HepG2 (cell line): ENCODE measurements at regions of chr11 and their contacts with region 1.

Region 1: DNA sequence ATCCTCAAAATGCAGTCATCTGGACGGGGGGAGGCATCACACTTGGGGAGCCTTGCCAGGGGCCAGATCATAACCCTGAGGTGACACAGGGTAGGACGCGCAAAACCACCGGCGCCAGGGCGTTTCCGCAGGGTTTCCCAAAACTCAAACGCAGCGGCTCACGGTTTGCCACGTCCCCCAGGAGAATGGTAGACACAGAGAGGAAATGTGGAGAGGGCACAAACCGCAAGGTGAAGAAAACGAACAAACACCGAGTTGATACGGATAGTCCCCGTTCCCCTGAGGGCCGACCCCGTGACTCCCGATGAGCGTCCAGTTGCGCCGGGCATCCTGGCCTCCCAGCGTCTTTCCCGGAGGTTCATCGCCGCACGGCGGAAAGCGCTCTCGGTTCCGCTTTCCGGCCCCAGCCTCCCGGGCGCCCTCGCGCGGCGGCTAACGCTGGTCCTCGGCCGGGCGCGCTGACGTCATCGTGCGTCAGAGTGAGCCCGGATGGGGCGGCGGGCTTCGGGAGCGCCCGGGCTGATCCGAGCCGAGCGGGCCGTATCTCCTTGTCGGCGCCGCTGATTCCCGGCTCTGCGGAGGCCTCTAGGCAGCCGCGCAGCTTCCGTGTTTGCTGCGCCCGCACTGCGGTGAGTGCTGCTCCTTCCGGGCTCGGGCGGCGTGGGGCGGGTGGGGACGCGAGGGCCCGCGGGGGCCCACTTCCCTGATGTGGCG is at the start of gene BIRC2:
- DNase-seq: peak; percentile 79
- ATAC-seq: peak; percentile 96
- H3K4me3 ChIP-seq: peak within 1 kb of the TSS; percentile 85 to 98 (median 96)
- H3K27ac ChIP-seq: peak within 1 kb of the TSS; percentile 96
- H3K4me1 ChIP-seq: peaks cover 30% of the 10 kb centered on the region
- H3K27me3 ChIP-seq: no peaks in the 10 kb centered on the region; a peak in 1 of 5 replicates
- CTCF ChIP-seq: peak; percentile 95
- EP300 ChIP-seq: peak; percentile 16 to 38; a peak in 1 of 4 replicates
- POLR2A ChIP-seq: peak; percentile 78 to 82
- RAD21 ChIP-seq: peak; percentile 78
- total RNA-seq, gene BIRC2: 61.7 and 83.2 TPM in 2 replicates

Region 2: GRCh38 chr11:101929294-101929916 is 417.5 kb before region 1 on chr11:
- CTCF ChIA-PET with region 1: no interaction called
- POLR2A ChIA-PET with region 1: no interaction called
- in situ Hi-C with region 1: no loop called
- intact Hi-C with region 1: no loop called
- DNase-seq: peak; percentile 58
- ATAC-seq: peak; percentile 99
- H3K4me3 ChIP-seq: no peak overlapping the region; a peak in 1 of 6 replicates
- H3K27ac ChIP-seq: no peak overlapping the region
- H3K4me1 ChIP-seq: peaks cover 10% of the 10 kb centered on the region
- H3K27me3 ChIP-seq: no peaks in the 10 kb centered on the region
- CTCF ChIP-seq: peak; percentile 66
- EP300 ChIP-seq: no peak
- POLR2A ChIP-seq: no peak
- RAD21 ChIP-seq: peak; percentile 51

Region 3: GRCh38 chr11:102287964-102288724 is 58.8 kb before region 1 on chr11:
- CTCF ChIA-PET with region 1: interaction called, 10 read pairs
- POLR2A ChIA-PET with region 1: no interaction called
- in situ Hi-C with region 1: no loop called
- intact Hi-C with region 1: loop called (anchors 2 kb)
- DNase-seq: peak; percentile 68
- ATAC-seq: peak; percentile 86
- H3K4me3 ChIP-seq: no peak overlapping the region
- H3K27ac ChIP-seq: no peak overlapping the region
- H3K4me1 ChIP-seq: peaks cover 55% of the 10 kb centered on the region
- H3K27me3 ChIP-seq: no peaks in the 10 kb centered on the region
- CTCF ChIP-seq: peak; percentile 85
- EP300 ChIP-seq: 0 out of 4 replicates have a peak, but pooled peaks of 1 of the 2 experiments have one; percentile 13
- POLR2A ChIP-seq: no peak
- RAD21 ChIP-seq: peak; percentile 74

Region 4: GRCh38 chr11:102317099-102317767 is 29.7 kb before region 1 on chr11 and contains the start of gene BIRC3:
- CTCF ChIA-PET with region 1: no interaction called
- POLR2A ChIA-PET with region 1: no interaction called
- in situ Hi-C with region 1: no loop called
- intact Hi-C with region 1: loop called (anchors 2 kb)
- DNase-seq: peak; percentile 78
- ATAC-seq: peak; percentile 98
- H3K4me3 ChIP-seq: peak within 1 kb of the TSS; percentile 59 to 80 (median 70)
- H3K27ac ChIP-seq: no peak within 1 kb of the TSS
- H3K4me1 ChIP-seq: peaks cover 29% of the 10 kb centered on the region
- H3K27me3 ChIP-seq: no peaks in the 10 kb centered on the region
- CTCF ChIP-seq: peak; percentile 59
- EP300 ChIP-seq: 0 out of 4 replicates have a peak, but pooled peaks of 1 of the 2 experiments have one; percentile 16
- POLR2A ChIP-seq: peak in 1 of 2 experiments; percentile 50; a peak in 3 of 4 replicates
- RAD21 ChIP-seq: 0 out of 2 replicates have a peak, but pooled peaks have one; percentile 25
- total RNA-seq, gene BIRC3: 4.2 and 7.5 TPM in 2 replicates

Region 5: DNA sequence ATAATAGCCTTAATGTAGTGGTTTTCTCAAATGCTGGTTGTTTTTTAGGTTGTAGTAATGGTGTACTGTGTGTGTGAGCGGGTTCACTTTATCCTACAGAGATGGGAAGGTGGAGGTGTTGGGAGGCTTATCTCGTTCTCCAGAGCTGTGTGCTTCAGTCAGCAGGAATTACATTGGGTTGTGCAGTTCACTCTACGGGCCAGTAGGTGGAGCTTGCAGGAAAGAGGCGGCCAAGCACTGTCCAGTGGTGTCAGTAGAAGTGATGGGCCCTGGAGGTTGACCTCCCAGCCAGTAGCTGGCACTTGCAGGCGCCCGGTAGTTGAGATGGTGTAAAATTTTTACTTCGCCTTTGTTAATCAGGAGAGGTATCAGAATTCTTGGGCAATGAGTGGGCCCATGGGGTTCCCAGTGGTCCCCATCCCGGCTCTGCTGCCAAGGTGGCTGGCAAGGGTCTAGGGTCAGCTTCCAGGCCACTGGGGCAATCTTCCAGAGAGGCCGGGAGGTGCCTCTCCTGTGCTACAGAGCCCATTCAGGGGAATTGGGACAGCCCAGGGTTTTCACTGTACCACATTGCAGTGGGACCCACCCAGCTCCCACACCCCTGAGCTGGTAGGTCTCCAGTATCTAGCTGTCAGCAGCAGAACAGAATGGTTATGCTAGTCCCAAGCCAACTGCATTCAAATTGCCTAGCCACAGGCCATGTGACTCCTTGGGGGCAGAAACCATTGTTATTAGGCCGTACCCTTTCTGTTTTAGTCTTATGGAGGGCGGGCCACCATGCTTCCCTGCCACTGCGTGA is 44.0 kb after region 1 on chr11:
- CTCF ChIA-PET with region 1: no interaction called
- POLR2A ChIA-PET with region 1: no interaction called
- in situ Hi-C with region 1: no loop called
- intact Hi-C with region 1: loop called (anchors 5 kb)
- DNase-seq: peak; percentile 70
- ATAC-seq: peak; percentile 84
- H3K4me3 ChIP-seq: no peak overlapping the region
- H3K27ac ChIP-seq: no peak overlapping the region
- H3K4me1 ChIP-seq: no peaks in the 10 kb centered on the region; the same call in 1 of the 2 replicates
- H3K27me3 ChIP-seq: no peaks in the 10 kb centered on the region
- CTCF ChIP-seq: peak; percentile 92
- EP300 ChIP-seq: no peak
- POLR2A ChIP-seq: no peak
- RAD21 ChIP-seq: peak; percentile 78

Region 6: DNA sequence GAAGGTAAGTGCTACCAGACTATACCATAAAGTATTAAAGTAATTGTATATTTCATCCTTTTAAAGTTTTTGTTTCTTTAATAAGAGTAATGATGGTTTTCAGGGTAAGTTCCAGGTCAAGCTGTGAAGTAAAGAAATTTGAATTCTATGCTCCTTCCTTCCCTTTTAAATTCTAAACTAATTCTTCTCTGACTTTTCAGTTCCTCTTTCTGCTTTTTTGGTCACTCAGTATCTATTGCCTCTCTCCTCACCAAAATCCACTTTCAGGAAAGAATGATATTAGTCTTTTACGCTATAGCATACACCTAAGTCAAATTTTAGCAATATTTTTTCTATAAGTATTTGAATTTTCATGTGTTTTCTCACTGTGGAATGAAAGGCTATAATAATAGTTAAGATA is 369.6 kb after region 1 on chr11:
- CTCF ChIA-PET with region 1: no interaction called
- POLR2A ChIA-PET with region 1: no interaction called
- in situ Hi-C with region 1: no loop called
- intact Hi-C with region 1: no loop called
- DNase-seq: no peak
- ATAC-seq: no peak
- H3K4me3 ChIP-seq: no peak overlapping the region
- H3K27ac ChIP-seq: no peak overlapping the region
- H3K4me1 ChIP-seq: no peaks in the 10 kb centered on the region
- H3K27me3 ChIP-seq: no peaks in the 10 kb centered on the region; a peak in 1 of 5 replicates
- CTCF ChIP-seq: no peak
- EP300 ChIP-seq: no peak
- POLR2A ChIP-seq: no peak
- RAD21 ChIP-seq: no peak